Calu3 (cell line): ENCODE measurements at regions of chr1 and their contacts with region 1.

Region 1: DNA sequence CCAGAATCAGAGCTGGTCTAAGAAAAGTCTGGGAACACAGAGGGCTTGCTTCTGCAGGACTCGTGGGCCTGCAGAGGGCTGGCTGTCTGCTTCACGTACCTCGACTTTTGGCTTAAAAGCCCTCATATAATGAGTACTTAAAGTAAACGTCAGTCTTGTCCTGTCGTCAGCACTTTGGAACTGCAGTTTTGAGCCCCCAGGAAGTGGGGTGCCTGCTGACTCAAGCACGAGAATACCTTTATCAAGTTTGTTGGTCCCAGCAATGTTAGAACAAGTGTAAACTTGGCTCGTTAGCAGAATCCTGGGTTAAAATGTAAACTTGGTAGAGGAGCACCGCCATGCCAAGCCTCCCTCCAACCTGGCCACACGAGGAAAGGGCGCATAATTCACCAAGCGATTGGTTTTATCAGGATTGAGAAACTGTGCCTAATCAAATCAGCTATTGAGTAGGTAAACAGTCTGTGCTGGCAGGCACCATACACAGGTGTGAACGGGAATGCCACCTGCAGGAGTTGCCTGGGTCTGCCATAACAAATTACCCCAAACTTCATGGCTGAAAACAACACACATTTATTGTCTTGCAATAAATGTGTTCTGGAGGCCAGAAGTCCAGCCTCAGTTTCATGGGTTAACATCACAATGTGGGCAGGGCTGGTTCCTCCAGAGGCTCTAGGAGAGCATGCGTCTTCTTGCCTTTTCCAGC is 45.0 kb upstream of the FHAD1 start:
- DNase-seq: peak; percentile 70
- H3K4me3 Mint-ChIP-seq: peak overlapping the region; percentile 52
- H3K27ac Mint-ChIP-seq: peak overlapping the region; percentile 92
- H3K4me1 Mint-ChIP-seq: peaks cover 78% of the 10 kb centered on the region
- H3K27me3 Mint-ChIP-seq: no peaks in the 10 kb centered on the region
- CTCF ChIP-seq: no peak

Region 2: DNA sequence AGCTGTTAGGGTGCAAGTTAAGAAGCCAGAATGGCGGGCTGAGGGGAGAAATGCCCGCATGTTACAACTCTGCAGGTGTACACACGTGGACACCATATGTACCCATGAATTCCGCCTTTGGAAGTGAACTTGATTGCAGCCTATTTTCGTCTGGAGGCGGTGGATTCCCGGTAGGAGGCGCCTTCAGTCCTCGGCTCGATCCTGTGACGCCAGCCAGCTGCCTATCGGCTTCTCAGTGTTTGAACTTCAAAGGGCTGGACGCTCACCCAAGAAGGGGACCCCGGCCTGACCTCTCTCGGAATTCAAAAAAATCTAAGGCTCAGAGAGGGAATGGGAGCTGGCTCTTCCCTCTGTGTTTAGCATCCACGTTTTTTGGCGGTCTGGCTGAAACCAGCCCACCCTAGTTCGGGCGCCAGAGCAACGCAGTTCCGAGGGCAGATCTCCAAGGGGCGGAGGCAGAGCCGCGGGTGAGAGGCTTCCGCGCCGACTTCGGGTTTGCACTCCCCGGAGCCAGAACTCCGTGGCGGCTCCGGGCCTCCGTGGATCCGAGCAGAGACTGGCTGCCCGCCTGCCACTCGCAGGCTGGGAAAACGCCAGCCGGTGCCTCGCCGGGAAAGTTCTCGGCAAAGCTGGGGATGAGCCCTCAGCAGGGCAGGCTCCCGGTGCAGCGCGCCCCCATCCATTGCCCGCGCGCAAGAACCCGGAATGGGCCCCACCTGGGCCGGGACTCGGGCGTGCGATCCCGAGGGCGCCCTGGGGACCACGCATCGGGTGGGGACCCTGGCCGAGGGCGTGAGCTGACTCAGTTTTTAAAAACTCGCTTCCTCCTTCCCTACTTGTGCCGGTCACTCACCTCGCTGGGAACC is 49.4 kb before region 1 on chr1:
- CTCF ChIA-PET with region 1: interaction called, 19 read pairs
- intact Hi-C with region 1: loop called (anchors 2 kb)
- DNase-seq: peak; percentile 80
- H3K4me3 Mint-ChIP-seq: peak overlapping the region; percentile 77
- H3K27ac Mint-ChIP-seq: peak overlapping the region; percentile 42
- H3K4me1 Mint-ChIP-seq: peaks cover 45% of the 10 kb centered on the region
- H3K27me3 Mint-ChIP-seq: no peaks in the 10 kb centered on the region
- CTCF ChIP-seq: peak; percentile 41

Region 3: GRCh38 chr1:15178571-15179484 is 23.2 kb before region 1 on chr1:
- CTCF ChIA-PET with region 1: interaction called, 14 read pairs
- intact Hi-C with region 1: loop called (anchors 2 kb)
- DNase-seq: peak; percentile 43
- H3K4me3 Mint-ChIP-seq: peak overlapping the region; percentile 39
- H3K27ac Mint-ChIP-seq: peak overlapping the region; percentile 89
- H3K4me1 Mint-ChIP-seq: peaks cover 71% of the 10 kb centered on the region
- H3K27me3 Mint-ChIP-seq: no peaks in the 10 kb centered on the region
- CTCF ChIP-seq: no peak

Region 4: DNA sequence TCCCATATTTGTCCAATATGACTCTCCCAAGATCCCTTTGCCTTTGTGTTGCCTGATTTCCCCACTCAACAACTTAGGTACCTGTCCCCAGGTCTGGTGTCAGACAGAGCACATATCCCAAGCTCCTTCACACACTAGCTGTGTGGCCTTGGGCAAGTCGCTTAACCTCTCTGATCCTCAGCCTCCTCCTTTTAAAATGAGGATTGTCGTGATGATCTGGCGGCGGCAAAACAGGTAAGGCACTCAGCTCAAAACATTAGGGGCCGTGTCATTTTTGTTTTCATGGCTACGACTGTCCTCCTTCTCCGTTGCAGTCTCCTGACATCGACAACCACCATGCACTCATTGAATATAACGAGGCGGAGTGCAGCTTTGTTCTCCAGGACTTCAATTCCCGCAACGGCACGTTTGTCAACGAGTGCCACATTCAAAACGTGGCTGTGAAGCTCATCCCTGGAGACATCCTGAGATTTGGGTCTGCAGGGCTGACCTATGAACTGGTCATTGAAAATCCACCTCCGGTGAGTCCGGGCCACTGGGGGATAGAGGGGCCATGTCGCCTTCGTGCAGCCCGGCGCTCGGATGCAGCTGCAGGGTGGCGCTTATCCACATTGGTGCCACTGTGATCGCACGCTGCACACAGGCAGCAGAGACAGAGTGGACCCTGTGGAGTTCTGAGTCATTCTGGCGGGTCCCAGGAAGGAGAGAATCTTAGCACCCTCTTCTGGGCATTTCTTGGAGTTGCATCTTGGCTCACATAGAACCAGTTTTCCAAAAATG is 70.2 kb after region 1 on chr1:
- CTCF ChIA-PET with region 1: no interaction called
- intact Hi-C with region 1: loop called (anchors 2 kb)
- DNase-seq: peak; percentile 60
- H3K4me3 Mint-ChIP-seq: no peak overlapping the region
- H3K27ac Mint-ChIP-seq: no peak overlapping the region
- H3K4me1 Mint-ChIP-seq: no peaks in the 10 kb centered on the region
- H3K27me3 Mint-ChIP-seq: no peaks in the 10 kb centered on the region
- CTCF ChIP-seq: peak; percentile 65

Region 5: GRCh38 chr1:15370781-15371520 is 169.0 kb after region 1 on chr1:
- CTCF ChIA-PET with region 1: no interaction called
- intact Hi-C with region 1: no loop called
- DNase-seq: no peak
- H3K4me3 Mint-ChIP-seq: no peak overlapping the region
- H3K27ac Mint-ChIP-seq: no peak overlapping the region
- H3K4me1 Mint-ChIP-seq: peaks cover 14% of the 10 kb centered on the region
- H3K27me3 Mint-ChIP-seq: no peaks in the 10 kb centered on the region
- CTCF ChIP-seq: no peak